H1 (cell line): ENCODE measurements at regions of chr5 and their contacts with region 1.

Region 1: GRCh38 chr5:115841382-115842088 is at the starts of genes AP3S1 and ATG12:
- DNase-seq: peak; percentile 67 to 92
- H3K4me3 ChIP-seq: peak within 1 kb of the TSS; percentile 75 to 89 (median 84)
- H3K27ac ChIP-seq: peak within 1 kb of the TSS; percentile 97
- H3K4me1 ChIP-seq: peaks cover 0 to 5% (median 1%) of the 10 kb centered on the region in 4 experiments; a peak in 2 of 7 replicates
- H3K27me3 ChIP-seq: no peaks in the 10 kb centered on the region
- CTCF ChIP-seq: no peak
- EP300 ChIP-seq: no peak
- POLR2A ChIP-seq: peak in 1 of 2 experiments; percentile 85; a peak in 2 of 3 replicates
- RAD21 ChIP-seq: no peak
- total RNA-seq, gene AP3S1: 72.7 and 93.0 TPM in 2 replicates
- total RNA-seq, gene ATG12: 49.3 and 51.4 TPM in 2 replicates

Region 2: DNA sequence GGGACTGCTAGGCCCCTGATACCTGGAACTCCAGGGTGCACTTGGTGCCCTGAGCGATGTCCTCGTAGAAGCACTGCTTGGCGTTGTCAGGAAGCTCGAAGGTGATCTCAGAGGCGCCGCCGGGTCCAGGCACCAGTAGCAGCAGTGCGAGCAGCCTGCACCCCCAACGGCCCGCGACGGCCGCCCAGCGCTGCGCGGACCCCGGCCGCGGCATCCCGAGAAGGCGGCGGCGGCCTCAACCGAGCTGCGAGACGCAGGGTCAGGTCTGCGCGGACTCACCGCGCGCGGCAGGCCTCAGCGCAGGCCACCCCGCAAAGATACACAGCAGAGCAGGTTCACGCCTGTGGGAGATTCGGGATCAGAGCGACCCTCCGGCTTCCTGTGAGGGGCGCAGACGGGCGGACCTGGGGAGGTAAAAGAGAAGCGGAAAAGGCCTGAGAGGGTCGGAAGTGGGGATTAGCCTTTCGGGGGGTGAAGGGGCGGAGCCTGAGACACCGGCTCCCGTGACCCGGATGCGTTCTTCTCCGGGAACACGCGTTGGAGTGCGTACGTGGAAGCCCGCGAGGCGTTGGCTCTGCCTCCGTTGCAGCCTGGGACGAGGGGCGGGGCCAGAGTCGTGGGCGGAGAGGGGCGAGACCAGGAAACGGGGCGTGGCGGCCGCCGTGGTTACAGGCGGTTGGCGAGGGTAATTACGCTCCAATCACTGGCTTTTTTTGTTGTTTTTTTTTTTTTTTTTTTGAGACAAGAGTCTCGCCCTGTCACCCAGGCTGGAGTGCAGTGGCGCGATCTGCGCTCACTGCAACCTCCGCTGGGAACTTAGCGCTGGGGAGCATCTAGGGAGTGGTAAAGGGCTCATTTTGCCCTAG is 215.7 kb before region 1 on chr5 and contains the start of gene TMED7:
- CTCF ChIA-PET with region 1: interaction called, 16 read pairs
- POLR2A ChIA-PET with region 1: interaction called, 11 read pairs
- DNase-seq: peak; percentile 85 to 95
- H3K4me3 ChIP-seq: peak within 1 kb of the TSS; percentile 86 to 96 (median 94)
- H3K27ac ChIP-seq: peak within 1 kb of the TSS; percentile 30; the same call in 1 of the 2 replicates
- H3K4me1 ChIP-seq: no peaks in the 10 kb centered on the region; a peak in 2 of 7 replicates
- H3K27me3 ChIP-seq: no peaks in the 10 kb centered on the region
- CTCF ChIP-seq: no peak; a peak in 1 of 4 replicates
- EP300 ChIP-seq: no peak
- POLR2A ChIP-seq: no peak; a peak in 1 of 3 replicates
- RAD21 ChIP-seq: no peak; a peak in 1 of 4 replicates
- total RNA-seq, gene TMED7: 72.8 and 75.2 TPM in 2 replicates

Region 3: GRCh38 chr5:115702025-115702424 is 139.5 kb before region 1 on chr5:
- CTCF ChIA-PET with region 1: no interaction called
- POLR2A ChIA-PET with region 1: no interaction called
- DNase-seq: no peak
- H3K4me3 ChIP-seq: no peak overlapping the region
- H3K27ac ChIP-seq: no peak overlapping the region
- H3K4me1 ChIP-seq: no peaks in the 10 kb centered on the region
- H3K27me3 ChIP-seq: no peaks in the 10 kb centered on the region
- CTCF ChIP-seq: no peak
- EP300 ChIP-seq: no peak
- POLR2A ChIP-seq: no peak
- RAD21 ChIP-seq: no peak

Region 4: GRCh38 chr5:115831163-115831768 is 10.3 kb before region 1 on chr5:
- CTCF ChIA-PET with region 1: interaction called, 12 read pairs
- POLR2A ChIA-PET with region 1: interaction called, 4 read pairs
- DNase-seq: no peak
- H3K4me3 ChIP-seq: no peak overlapping the region
- H3K27ac ChIP-seq: no peak overlapping the region
- H3K4me1 ChIP-seq: no peaks in the 10 kb centered on the region
- H3K27me3 ChIP-seq: no peaks in the 10 kb centered on the region
- CTCF ChIP-seq: peak in 2 of 3 experiments; percentile 63 to 71; a peak in 3 of 4 replicates
- EP300 ChIP-seq: no peak
- POLR2A ChIP-seq: no peak
- RAD21 ChIP-seq: peak; percentile 65 to 75

Region 5: DNA sequence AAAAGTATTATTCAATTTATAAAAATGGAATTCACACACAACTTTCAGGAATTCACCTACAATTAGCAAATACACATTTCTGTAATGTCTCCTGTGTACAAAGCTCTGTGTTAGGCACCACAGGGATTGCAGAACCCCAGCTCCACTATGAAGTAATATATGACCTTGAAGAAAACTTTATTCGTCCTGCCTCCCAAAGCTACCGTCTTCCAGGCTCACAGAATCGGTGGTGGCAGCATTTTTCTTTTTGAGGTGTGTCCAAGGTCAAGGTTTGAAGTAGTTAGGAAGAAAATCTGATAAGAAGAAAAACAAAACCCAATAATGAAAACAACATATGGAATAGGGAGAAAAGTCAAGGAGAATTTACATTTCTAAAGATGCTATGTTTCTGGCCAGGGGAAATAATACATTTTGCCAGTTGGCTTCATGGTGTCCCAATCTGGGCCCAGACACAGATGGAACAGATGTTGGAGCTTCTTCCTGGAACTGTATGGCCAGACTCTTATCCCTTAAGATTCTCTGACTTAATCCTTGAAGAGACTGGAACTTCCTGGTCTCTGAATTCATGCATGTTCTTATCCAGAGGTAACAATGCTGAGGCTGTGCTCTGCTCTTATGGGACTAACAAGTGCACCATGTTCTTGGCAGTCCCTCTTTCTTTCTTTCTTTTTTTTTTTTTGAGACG is 98.7 kb after region 1 on chr5:
- CTCF ChIA-PET with region 1: no interaction called
- POLR2A ChIA-PET with region 1: no interaction called
- DNase-seq: no peak
- H3K4me3 ChIP-seq: no peak overlapping the region
- H3K27ac ChIP-seq: no peak overlapping the region
- H3K4me1 ChIP-seq: peaks cover 0 to 6% (median 1%) of the 10 kb centered on the region in 4 experiments; a peak in 2 of 7 replicates
- H3K27me3 ChIP-seq: no peaks in the 10 kb centered on the region
- CTCF ChIP-seq: no peak
- EP300 ChIP-seq: no peak
- POLR2A ChIP-seq: no peak
- RAD21 ChIP-seq: no peak